ENCODE measurements at regions of chr2 and their contacts with region 1.

Region 1: DNA sequence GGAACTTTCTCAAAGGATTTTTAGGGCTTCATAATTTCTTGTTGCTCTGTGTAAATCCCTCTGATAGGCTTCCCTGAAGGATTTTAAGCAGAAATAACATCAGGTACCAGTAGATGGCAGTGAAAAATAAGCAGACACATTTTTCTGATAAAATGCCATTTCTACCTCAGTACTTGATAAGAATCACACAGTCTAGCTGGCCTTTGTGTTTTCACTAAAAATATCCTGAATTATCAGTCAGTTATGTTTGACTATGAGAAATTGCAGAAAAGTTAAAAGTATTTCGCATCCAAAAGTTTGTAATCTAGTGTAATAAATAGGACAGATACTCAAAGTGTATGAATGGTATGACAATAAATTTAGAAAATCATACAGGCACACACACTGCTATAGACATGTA is 68.7 kb downstream of the DNAJC10 start:
- DNase-seq: peak; percentile 61
- ATAC-seq: peak; percentile 49; the same call in 1 of the 2 replicates
- H3K4me3 ChIP-seq: no peak overlapping the region
- H3K27ac ChIP-seq: no peak overlapping the region
- H3K4me1 ChIP-seq: no peaks in the 10 kb centered on the region
- H3K27me3 ChIP-seq: no peaks in the 10 kb centered on the region
- CTCF ChIP-seq: peak; percentile 76

Region 2: DNA sequence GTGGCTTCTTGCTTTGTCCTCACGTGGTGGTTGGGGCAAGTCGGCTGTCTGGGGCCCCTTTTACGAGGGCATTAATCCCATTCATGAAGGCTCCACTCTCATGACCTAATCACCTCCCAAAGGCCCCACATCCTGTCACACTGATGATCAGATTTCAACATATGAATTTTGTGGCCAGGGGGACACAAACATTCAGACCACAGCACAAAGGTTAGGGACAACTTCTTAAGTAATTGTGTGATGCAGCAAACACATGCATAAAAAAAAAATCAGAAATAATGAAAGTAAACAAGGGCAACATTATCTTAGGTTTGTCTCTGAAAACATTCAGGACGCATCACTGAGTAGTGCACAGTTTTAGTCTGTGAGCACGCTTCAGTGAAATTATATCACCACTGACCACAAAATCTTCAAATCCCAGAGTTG is 135.9 kb after region 1 on chr2:
- CTCF ChIA-PET with region 1: no interaction called
- POLR2A ChIA-PET with region 1: no interaction called
- intact Hi-C with region 1: loop called (anchors 5 kb)
- DNase-seq: no peak
- ATAC-seq: no peak
- H3K4me3 ChIP-seq: no peak overlapping the region
- H3K27ac ChIP-seq: no peak overlapping the region
- H3K4me1 ChIP-seq: peaks cover 9% of the 10 kb centered on the region
- H3K27me3 ChIP-seq: no peaks in the 10 kb centered on the region
- CTCF ChIP-seq: no peak

Region 3: DNA sequence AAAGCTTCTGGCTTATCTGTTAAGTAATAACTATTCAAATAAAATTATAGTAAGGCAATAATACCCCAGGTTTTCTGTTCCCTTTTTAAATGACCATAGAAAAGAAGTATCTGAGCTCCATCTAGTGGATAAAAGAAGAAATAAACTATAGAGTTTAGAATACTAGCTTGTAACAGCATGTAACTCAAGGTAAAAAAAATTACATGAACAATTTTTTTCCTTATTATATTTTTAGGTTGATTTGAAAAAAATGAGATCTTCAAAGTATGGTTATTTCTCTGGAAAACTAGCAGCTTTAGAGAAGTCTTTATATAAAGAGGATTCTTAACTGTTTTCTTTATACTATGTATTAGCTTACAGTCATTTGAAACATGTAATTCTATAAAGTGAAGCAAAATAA is 195.3 kb after region 1 on chr2:
- CTCF ChIA-PET with region 1: no interaction called
- POLR2A ChIA-PET with region 1: no interaction called
- intact Hi-C with region 1: loop called (anchors 2 kb)
- DNase-seq: peak; percentile 69
- ATAC-seq: peak; percentile 49
- H3K4me3 ChIP-seq: no peak overlapping the region
- H3K27ac ChIP-seq: no peak overlapping the region
- H3K4me1 ChIP-seq: no peaks in the 10 kb centered on the region
- H3K27me3 ChIP-seq: no peaks in the 10 kb centered on the region
- CTCF ChIP-seq: peak; percentile 72

Measured in PC-3 (cell line).